ENCODE measurements at regions of chr2 and their contacts with region 1.

Region 1: GRCh38 chr2:28751252-28751955 is at the start of gene PPP1CB:
- DNase-seq: peak; percentile 99
- total RNA-seq, gene PPP1CB: 429 to 446 TPM

Region 2: DNA sequence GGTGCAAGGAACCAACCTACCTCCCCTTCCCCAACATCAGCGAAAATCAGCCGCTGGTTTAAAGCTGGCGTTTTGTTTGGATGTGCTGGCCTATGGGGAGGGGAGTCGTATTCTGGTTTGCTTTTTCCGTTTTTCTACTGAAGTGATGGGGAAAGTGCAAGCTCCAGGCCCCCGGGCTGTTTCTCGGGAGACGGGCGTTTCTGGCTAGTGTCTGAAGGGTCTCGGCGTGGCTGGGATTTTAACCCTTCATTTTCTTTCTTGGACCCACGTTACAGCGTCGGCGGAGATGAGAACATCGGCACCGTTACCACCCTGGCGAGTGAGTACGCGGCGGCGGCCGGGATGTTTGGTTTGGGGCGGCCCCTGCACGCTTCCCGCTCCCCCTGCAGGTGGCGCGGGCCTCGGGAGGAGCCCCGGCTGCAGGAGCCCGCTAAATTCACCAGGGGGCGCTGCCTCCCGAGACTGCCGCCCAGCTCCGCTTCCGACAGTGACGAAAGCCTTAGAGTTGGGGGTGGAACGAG is 184.8 kb before region 1 on chr2:
- intact Hi-C with region 1: loop called in 1 of 2 experiments (anchors 2 kb)
- DNase-seq: peak; percentile 96

Region 3: DNA sequence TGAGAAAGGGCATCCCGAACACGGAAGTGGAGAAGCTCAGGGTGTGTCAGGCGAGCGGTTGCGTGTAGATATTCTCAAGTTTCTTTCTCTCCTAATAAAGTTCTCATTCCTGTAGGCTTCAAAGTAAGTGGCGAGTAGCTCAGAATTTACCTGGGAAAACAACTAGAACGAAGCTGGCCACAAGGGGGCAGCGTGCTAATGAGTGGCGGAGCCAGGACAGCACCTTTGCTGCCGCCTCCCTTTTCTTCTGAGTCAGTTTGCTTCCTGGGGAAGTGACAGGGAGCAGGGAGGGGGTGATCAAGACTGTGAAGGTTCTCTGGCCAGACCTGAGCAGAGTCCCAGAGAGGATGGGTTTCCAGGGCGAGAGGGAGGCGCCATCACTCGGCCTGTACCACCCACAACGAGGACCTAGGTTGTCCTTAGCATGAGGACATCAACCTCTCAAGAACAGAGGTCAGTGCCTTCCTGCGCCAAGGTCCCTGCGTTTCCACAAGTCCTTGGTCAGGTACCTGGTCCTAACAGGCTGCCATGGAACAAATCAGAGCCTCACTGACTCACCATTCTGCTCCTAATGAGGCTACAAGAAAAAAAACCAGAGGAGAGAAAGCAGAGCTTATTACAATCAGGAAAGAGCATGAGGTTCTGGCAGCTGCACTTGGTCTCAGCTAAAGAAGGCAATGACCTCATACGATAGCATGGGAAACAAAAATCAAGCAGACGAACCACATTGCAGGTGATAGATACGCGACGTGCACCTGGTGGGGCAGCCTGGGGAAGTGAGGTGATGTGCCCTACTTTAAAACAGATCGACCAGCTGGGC is 156.9 kb before region 1 on chr2:
- intact Hi-C with region 1: loop called in 1 of 2 experiments (anchors 5 kb)
- DNase-seq: peak; percentile 94